Activated naive CD4-positive, alpha-beta T cell treated with anti-CD3 and anti-CD28 coated beads for 36 hours (primary cell): ENCODE measurements at regions of chr6 and their contacts with region 1.

Region 1: GRCh38 chr6:151014404-151015100 is 149.1 kb downstream of the MTHFD1L start:
- DNase-seq: peak; percentile 68
- H3K4me3 Mint-ChIP-seq: no peak overlapping the region
- H3K27ac Mint-ChIP-seq: no peak overlapping the region
- H3K4me1 Mint-ChIP-seq: no peaks in the 10 kb centered on the region
- H3K27me3 Mint-ChIP-seq: no peaks in the 10 kb centered on the region

Region 2: GRCh38 chr6:150891888-150892485 is 122.6 kb before region 1 on chr6:
- CTCF ChIA-PET with region 1: interaction called, 4 read pairs
- intact Hi-C with region 1: loop called (anchors 5 kb)
- DNase-seq: peak; percentile 71
- H3K4me3 Mint-ChIP-seq: no peak overlapping the region
- H3K27ac Mint-ChIP-seq: no peak overlapping the region
- H3K4me1 Mint-ChIP-seq: peaks cover 26% of the 10 kb centered on the region
- H3K27me3 Mint-ChIP-seq: no peaks in the 10 kb centered on the region

Region 3: DNA sequence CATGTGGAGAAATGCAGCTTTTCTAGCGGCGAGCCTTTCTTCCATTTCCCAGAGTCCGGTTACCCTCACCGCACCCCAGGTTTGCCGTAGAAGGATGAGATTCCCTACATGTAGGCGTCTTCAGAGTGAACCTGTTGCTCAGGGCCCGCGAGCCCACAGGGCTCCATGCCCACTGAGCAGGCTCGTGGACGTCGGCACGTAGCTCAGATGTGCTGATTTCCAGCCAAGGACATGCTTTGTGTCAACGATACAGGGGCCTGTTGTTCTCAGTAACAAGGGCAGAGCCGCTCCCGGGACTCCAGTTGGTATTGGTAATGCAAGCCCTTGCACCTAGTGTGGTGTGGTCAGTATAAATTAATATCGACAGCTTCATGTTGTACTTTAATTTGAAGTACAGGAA is 10.5 kb after region 1 on chr6:
- CTCF ChIA-PET with region 1: interaction called, 19 read pairs
- intact Hi-C with region 1: no loop called
- DNase-seq: no peak
- H3K4me3 Mint-ChIP-seq: no peak overlapping the region
- H3K27ac Mint-ChIP-seq: no peak overlapping the region
- H3K4me1 Mint-ChIP-seq: no peaks in the 10 kb centered on the region
- H3K27me3 Mint-ChIP-seq: no peaks in the 10 kb centered on the region

Region 4: DNA sequence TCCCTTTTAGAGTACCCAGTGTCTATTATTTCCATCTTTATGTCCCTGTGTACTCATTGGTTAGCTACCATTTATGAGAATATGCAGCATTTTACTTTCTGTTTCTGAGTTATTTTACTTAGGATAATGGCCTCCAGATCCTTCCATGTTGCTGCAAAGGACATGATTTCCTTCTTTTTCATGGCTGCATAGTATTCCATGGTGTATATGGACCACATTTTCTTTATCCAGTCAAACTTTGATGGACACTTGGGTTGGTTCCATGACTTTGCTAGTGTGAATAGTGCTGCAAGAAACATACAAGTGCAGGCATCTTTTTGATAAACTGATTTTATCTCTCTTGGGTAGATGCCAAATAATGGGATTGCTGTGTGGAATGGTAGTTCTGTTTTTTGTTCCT is 321.4 kb after region 1 on chr6:
- CTCF ChIA-PET with region 1: interaction called, 16 read pairs
- intact Hi-C with region 1: no loop called
- DNase-seq: no peak
- H3K4me3 Mint-ChIP-seq: no peak overlapping the region
- H3K27ac Mint-ChIP-seq: no peak overlapping the region
- H3K4me1 Mint-ChIP-seq: peaks cover 3% of the 10 kb centered on the region
- H3K27me3 Mint-ChIP-seq: no peaks in the 10 kb centered on the region

Region 5: GRCh38 chr6:151475653-151476523 is 461.3 kb after region 1 on chr6:
- CTCF ChIA-PET with region 1: no interaction called
- intact Hi-C with region 1: loop called (anchors 5 kb)
- DNase-seq: peak; percentile 64
- H3K4me3 Mint-ChIP-seq: no peak overlapping the region
- H3K27ac Mint-ChIP-seq: no peak overlapping the region
- H3K4me1 Mint-ChIP-seq: peaks cover 6% of the 10 kb centered on the region
- H3K27me3 Mint-ChIP-seq: no peaks in the 10 kb centered on the region